Astrocyte of the cerebellum (primary cell): ENCODE measurements at regions of chr12 and their contacts with region 1.

Region 1: GRCh38 chr12:57815177-57816000 is 3.1 kb downstream of the AVIL start:
- DNase-seq: no peak
- H3K4me3 ChIP-seq: no peak overlapping the region
- CTCF ChIP-seq: no peak

Region 2: DNA sequence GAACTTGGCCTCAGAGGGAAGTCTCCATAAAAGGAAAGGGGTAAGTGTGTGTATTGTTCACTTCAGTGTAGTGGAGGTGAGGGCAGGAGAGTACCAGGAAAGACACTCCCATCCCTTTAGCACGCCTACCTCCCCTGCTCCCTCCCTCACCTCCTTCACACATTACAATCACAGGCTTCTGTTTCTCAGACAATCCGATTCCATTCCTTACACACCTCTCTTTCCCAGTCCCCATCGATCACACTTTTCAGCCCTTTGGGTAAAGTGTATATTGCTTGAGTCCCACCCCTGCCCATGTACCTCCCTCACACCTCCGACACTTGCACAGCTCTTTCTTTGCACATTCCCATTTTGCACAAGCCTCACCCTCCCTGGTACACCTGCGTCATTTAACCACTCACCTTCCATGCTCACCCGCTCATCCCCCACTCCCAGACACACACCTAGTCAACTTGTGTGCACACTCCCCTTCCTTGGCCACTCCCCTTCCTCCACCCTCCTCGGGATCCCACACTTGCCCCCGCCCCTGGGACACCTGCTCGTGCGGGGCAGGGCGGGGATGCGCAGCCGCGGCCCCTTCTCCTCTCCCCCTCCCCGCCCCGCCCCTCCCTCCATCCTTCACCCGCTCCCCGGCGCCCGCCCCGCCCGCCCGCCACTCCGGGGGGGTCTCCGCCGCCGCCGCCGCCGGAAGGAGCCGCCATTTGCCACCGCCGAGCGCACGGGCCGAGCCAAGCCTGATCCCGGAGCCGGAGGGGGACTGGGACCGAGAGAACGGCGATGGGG is 60.8 kb before region 1 on chr12 and contains the start of gene MARCHF9:
- in situ Hi-C with region 1: loop called (anchors 5 kb)
- DNase-seq: no peak
- H3K4me3 ChIP-seq: peak within 1 kb of the TSS; percentile 55
- CTCF ChIP-seq: no peak

Region 3: GRCh38 chr12:58639302-58639934 is 824.0 kb after region 1 on chr12:
- in situ Hi-C with region 1: no loop called
- DNase-seq: no peak
- H3K4me3 ChIP-seq: no peak overlapping the region
- CTCF ChIP-seq: no peak